ENCODE measurements at regions of chr14 and their contacts with region 1.

Region 1: DNA sequence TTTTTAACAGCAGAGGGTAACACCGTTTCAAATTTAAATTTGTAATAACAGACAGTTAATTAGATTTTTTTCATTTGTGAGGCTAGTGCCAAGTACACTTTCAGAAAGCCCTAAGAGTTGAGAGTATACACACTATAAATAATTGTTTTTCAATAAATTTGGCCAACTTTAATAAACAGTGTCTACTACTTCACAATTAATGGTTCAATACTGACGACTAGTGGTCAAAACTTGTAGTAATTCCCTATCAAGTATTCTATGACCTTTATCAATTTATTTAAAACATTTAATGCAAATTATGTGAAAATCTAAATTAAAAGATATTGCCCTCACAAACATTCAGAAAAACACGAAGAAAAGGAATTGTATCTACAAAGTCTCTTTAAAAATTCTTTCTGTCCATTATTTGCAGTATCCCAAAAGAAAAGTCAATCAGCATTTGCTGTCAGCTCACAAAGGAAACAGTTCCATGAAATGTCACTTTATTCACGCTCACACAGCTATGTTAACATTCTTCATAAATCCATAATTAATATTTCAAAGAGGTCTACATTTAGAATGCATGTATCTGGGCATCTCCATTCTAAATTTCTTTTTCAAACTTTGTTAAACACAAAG is 91.2 kb downstream of the CEP128 start:
- DNase-seq: peak; percentile 12
- ATAC-seq: 0 out of 3 replicates have a peak, but pooled peaks have one; percentile 40
- H3K4me3 ChIP-seq: no peak overlapping the region
- H3K27ac ChIP-seq: no peak overlapping the region
- H3K4me1 ChIP-seq: no peaks in the 10 kb centered on the region
- H3K27me3 ChIP-seq: no peaks in the 10 kb centered on the region
- CTCF ChIP-seq: peak; percentile 57
- EP300 ChIP-seq: no peak
- POLR2A ChIP-seq: no peak
- RAD21 ChIP-seq: peak; percentile 24; the same call in 1 of the 2 replicates

Region 2: DNA sequence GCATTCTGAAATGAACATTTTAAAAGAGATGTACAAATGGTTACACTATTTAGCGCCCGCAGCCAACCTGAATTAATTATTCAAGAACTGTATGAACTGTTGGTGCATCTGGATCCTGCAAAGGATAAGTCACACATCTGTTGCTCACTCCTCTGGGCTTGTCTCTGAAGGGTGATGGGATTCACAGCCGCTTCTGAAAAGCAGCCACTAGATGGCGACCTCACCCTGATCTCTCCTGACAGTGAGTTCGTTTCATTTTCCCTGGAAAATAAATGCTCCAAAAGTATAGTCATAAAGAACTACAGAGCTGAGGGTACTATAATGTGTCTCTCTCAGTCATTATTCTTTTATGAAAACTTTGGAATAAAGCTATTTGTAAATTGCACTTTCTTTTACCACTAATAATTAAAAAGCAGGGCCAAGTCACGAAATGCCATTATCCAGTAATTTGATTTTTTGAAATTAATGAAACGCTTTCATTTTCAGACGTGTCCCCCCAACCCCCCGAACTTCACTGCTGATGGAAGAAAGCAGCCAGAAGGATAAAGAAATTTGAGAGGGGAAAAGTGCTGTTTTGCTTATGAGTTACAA is 1890.5 kb before region 1 on chr14:
- CTCF ChIA-PET with region 1: interaction called, 5 read pairs
- POLR2A ChIA-PET with region 1: no interaction called
- in situ Hi-C with region 1: loop called (anchors 10 kb)
- intact Hi-C with region 1: no loop called
- DNase-seq: peak; percentile 49
- ATAC-seq: peak; percentile 84
- H3K4me3 ChIP-seq: no peak overlapping the region
- H3K27ac ChIP-seq: no peak overlapping the region
- H3K4me1 ChIP-seq: no peaks in the 10 kb centered on the region
- H3K27me3 ChIP-seq: no peaks in the 10 kb centered on the region; a peak in 1 of 5 replicates
- CTCF ChIP-seq: peak; percentile 76
- EP300 ChIP-seq: no peak
- POLR2A ChIP-seq: no peak
- RAD21 ChIP-seq: no peak

Region 3: GRCh38 chr14:78967110-78967809 is 1883.0 kb before region 1 on chr14:
- CTCF ChIA-PET with region 1: interaction called, 5 read pairs
- POLR2A ChIA-PET with region 1: no interaction called
- in situ Hi-C with region 1: loop called (anchors 10 kb)
- intact Hi-C with region 1: loop called (anchors 1 kb)
- DNase-seq: no peak
- ATAC-seq: no peak
- H3K4me3 ChIP-seq: no peak overlapping the region
- H3K27ac ChIP-seq: no peak overlapping the region
- H3K4me1 ChIP-seq: no peaks in the 10 kb centered on the region
- H3K27me3 ChIP-seq: no peaks in the 10 kb centered on the region
- CTCF ChIP-seq: no peak
- EP300 ChIP-seq: no peak
- POLR2A ChIP-seq: no peak
- RAD21 ChIP-seq: no peak

Region 4: GRCh38 chr14:79011091-79011919 is 1839.0 kb before region 1 on chr14:
- CTCF ChIA-PET with region 1: no interaction called
- POLR2A ChIA-PET with region 1: no interaction called
- in situ Hi-C with region 1: no loop called
- intact Hi-C with region 1: loop called (anchors 2 kb)
- DNase-seq: peak; percentile 8
- ATAC-seq: no peak
- H3K4me3 ChIP-seq: no peak overlapping the region
- H3K27ac ChIP-seq: no peak overlapping the region
- H3K4me1 ChIP-seq: no peaks in the 10 kb centered on the region
- H3K27me3 ChIP-seq: no peaks in the 10 kb centered on the region
- CTCF ChIP-seq: peak; percentile 29
- EP300 ChIP-seq: no peak
- POLR2A ChIP-seq: no peak
- RAD21 ChIP-seq: no peak

Region 5: GRCh38 chr14:80055667-80056496 is 794.4 kb before region 1 on chr14:
- CTCF ChIA-PET with region 1: interaction called, 23 read pairs
- POLR2A ChIA-PET with region 1: no interaction called
- in situ Hi-C with region 1: loop called (anchors 25 kb)
- intact Hi-C with region 1: loop called (anchors 1 kb)
- DNase-seq: peak; percentile 16
- ATAC-seq: peak; percentile 68
- H3K4me3 ChIP-seq: no peak overlapping the region
- H3K27ac ChIP-seq: no peak overlapping the region
- H3K4me1 ChIP-seq: no peaks in the 10 kb centered on the region
- H3K27me3 ChIP-seq: no peaks in the 10 kb centered on the region
- CTCF ChIP-seq: peak; percentile 78
- EP300 ChIP-seq: no peak
- POLR2A ChIP-seq: no peak
- RAD21 ChIP-seq: peak; percentile 42; the same call in 1 of the 2 replicates

Region 6: GRCh38 chr14:80213599-80213998 is 636.7 kb before region 1 on chr14:
- CTCF ChIA-PET with region 1: interaction called, 10 read pairs
- POLR2A ChIA-PET with region 1: no interaction called
- in situ Hi-C with region 1: loop called (anchors 25 kb)
- intact Hi-C with region 1: loop called (anchors 1 kb)
- DNase-seq: peak; percentile 47
- ATAC-seq: peak; percentile 93
- H3K4me3 ChIP-seq: no peak overlapping the region
- H3K27ac ChIP-seq: no peak overlapping the region
- H3K4me1 ChIP-seq: no peaks in the 10 kb centered on the region
- H3K27me3 ChIP-seq: no peaks in the 10 kb centered on the region; a peak in 1 of 5 replicates
- CTCF ChIP-seq: peak; percentile 74
- EP300 ChIP-seq: no peak
- POLR2A ChIP-seq: no peak
- RAD21 ChIP-seq: peak; percentile 55; the same call in 1 of the 2 replicates

Region 7: DNA sequence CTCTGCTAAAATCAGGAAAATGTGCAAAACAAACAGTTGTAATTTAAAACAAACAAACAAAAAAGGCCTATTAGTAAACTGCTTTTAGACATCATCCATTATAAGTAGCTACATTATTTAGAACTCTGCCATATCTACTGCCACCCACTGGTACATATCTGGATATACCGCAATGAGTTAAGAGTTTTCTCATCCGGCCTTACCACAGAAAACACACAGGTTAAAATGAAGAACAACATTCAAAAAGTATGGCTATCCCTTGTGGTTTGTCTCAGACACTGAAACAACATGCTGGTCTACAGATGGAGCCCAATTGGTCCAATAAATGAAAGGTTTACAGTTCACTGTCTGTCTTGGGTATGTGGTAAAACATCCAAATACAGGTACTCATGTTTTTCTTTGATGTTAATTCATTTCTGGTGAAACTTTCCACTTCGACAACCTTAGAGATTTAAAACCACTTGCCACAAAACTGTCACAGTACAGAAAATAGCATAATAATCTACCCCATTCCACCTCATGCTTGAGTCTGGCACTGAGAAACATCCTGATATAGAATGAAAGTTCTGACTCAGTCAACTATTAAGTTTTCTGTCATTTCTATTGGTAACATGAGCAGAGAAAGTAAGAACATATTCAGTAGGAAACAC is 263.1 kb before region 1 on chr14:
- CTCF ChIA-PET with region 1: no interaction called
- POLR2A ChIA-PET with region 1: no interaction called
- in situ Hi-C with region 1: no loop called
- intact Hi-C with region 1: loop called (anchors 2 kb)
- DNase-seq: peak; percentile 30
- ATAC-seq: peak; percentile 74
- H3K4me3 ChIP-seq: no peak overlapping the region
- H3K27ac ChIP-seq: no peak overlapping the region
- H3K4me1 ChIP-seq: peaks cover 4% of the 10 kb centered on the region; the same call in 1 of the 2 replicates
- H3K27me3 ChIP-seq: no peaks in the 10 kb centered on the region
- CTCF ChIP-seq: peak; percentile 53
- EP300 ChIP-seq: no peak
- POLR2A ChIP-seq: no peak
- RAD21 ChIP-seq: no peak

Region 8: GRCh38 chr14:80906946-80907345 is 56.6 kb after region 1 on chr14:
- CTCF ChIA-PET with region 1: no interaction called
- POLR2A ChIA-PET with region 1: no interaction called
- in situ Hi-C with region 1: no loop called
- intact Hi-C with region 1: no loop called
- DNase-seq: no peak
- ATAC-seq: no peak
- H3K4me3 ChIP-seq: no peak overlapping the region
- H3K27ac ChIP-seq: no peak overlapping the region
- H3K4me1 ChIP-seq: peaks cover 6% of the 10 kb centered on the region; the same call in 1 of the 2 replicates
- H3K27me3 ChIP-seq: no peaks in the 10 kb centered on the region
- CTCF ChIP-seq: no peak
- EP300 ChIP-seq: no peak
- POLR2A ChIP-seq: no peak
- RAD21 ChIP-seq: no peak

Region 9: GRCh38 chr14:81062816-81063215 is 212.5 kb after region 1 on chr14:
- CTCF ChIA-PET with region 1: no interaction called
- POLR2A ChIA-PET with region 1: no interaction called
- in situ Hi-C with region 1: no loop called
- intact Hi-C with region 1: no loop called
- DNase-seq: peak; percentile 10
- ATAC-seq: peak; percentile 90
- H3K4me3 ChIP-seq: no peak overlapping the region
- H3K27ac ChIP-seq: no peak overlapping the region
- H3K4me1 ChIP-seq: no peaks in the 10 kb centered on the region
- H3K27me3 ChIP-seq: no peaks in the 10 kb centered on the region
- CTCF ChIP-seq: peak; percentile 47
- EP300 ChIP-seq: no peak
- POLR2A ChIP-seq: no peak
- RAD21 ChIP-seq: 0 out of 2 replicates have a peak, but pooled peaks have one; percentile 16

Measured in HepG2 (cell line).